Mammary epithelial cell (primary cell): ENCODE measurements at regions of chr2 and their contacts with region 1.

Region 1: GRCh38 chr2:216698895-216699294 is 3.5 kb upstream of the IGFBP5 start:
- DNase-seq: peak; percentile 49
- H3K4me3 ChIP-seq: no peak overlapping the region
- H3K27ac ChIP-seq: no peak overlapping the region
- H3K4me1 ChIP-seq: peaks cover 14% of the 10 kb centered on the region
- H3K27me3 ChIP-seq: peaks cover 4% of the 10 kb centered on the region
- CTCF ChIP-seq: peak; percentile 77 to 83

Region 2: GRCh38 chr2:216735086-216735485 is 36.2 kb after region 1 on chr2:
- CTCF ChIA-PET with region 1: no interaction called
- dilution Hi-C with region 1: loop called (anchors 5 kb)
- in situ Hi-C with region 1: no loop called
- intact Hi-C with region 1: no loop called
- DNase-seq: no peak
- H3K4me3 ChIP-seq: no peak overlapping the region
- H3K27ac ChIP-seq: no peak overlapping the region
- H3K4me1 ChIP-seq: no peaks in the 10 kb centered on the region
- H3K27me3 ChIP-seq: no peaks in the 10 kb centered on the region
- CTCF ChIP-seq: no peak

Region 3: DNA sequence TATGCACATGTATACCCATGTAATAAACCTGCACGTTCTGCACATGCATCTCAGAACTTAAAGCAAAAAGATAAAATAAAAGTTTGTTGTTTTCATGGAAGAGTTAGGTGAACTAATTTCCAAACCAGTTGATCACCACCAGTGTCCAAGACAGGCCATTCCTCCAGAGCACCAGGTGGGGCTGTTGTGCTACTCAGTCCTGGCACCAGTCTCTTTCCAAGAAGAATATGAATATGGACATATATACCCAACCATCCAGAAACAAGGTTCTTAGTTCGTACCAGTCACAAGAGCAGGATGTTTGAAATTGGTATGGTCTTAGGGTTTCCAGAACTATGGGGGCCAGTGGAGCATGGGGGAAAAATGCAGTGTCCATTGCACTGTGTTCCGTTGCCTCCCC is 178.2 kb after region 1 on chr2:
- CTCF ChIA-PET with region 1: no interaction called
- dilution Hi-C with region 1: no loop called
- in situ Hi-C with region 1: no loop called
- intact Hi-C with region 1: loop called (anchors 5 kb)
- DNase-seq: no peak
- H3K4me3 ChIP-seq: no peak overlapping the region
- H3K27ac ChIP-seq: no peak overlapping the region
- H3K4me1 ChIP-seq: no peaks in the 10 kb centered on the region
- H3K27me3 ChIP-seq: no peaks in the 10 kb centered on the region
- CTCF ChIP-seq: peak; percentile 37 to 55

Region 4: DNA sequence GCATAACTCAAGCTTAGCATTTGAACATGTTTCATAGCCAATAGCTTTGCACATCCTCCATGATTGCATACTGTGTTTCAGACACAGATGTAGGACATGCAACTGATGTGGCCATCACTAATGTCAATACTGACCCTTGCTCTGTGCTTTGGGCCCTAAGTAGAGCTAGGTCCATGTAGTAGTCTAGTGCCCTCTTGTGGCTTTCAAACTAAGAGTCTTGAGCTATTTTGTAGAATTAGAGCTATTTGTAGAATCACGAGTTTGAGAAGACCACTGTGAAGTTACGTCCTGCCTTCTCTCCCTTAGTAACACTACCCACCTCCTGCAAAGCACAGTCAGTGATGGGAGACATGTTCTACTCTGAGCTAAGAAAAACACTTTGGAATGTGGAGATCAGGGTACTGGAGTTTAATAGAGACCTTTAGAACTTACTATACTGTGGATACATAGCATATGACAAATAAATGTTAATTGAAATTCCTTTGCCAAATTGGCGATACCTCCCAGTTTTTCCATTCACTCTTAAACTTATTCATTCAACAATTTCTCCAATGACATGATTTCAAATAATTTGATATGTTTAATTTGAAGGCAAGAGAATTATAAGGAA is 467.5 kb after region 1 on chr2:
- CTCF ChIA-PET with region 1: no interaction called
- dilution Hi-C with region 1: no loop called
- in situ Hi-C with region 1: loop called (anchors 5 to 10 kb)
- intact Hi-C with region 1: loop called (anchors 1 kb)
- DNase-seq: peak; percentile 27
- H3K4me3 ChIP-seq: no peak overlapping the region
- H3K27ac ChIP-seq: no peak overlapping the region
- H3K4me1 ChIP-seq: peaks cover 8% of the 10 kb centered on the region
- H3K27me3 ChIP-seq: no peaks in the 10 kb centered on the region
- CTCF ChIP-seq: peak; percentile 57 to 69

Region 5: DNA sequence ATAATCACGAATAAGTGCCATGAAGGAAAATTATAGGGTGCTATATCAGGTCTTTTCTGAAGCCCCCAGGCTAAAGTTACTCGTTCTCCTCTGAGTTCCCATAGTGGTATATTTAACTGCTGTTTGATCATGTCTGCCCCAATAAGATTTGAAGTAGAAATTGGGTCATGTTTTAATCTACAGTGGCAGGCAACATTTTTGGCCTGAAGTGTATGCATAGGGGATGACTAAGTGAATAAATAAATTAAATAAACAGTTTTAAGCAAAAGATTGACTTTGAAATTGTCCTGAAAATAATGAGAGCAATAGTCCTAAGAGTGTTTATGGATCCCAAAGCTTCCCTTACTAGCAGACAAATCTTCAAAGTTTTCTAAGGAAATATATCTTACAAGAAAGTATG is 803.0 kb after region 1 on chr2:
- CTCF ChIA-PET with region 1: no interaction called
- dilution Hi-C with region 1: loop called (anchors 10 kb)
- in situ Hi-C with region 1: no loop called
- intact Hi-C with region 1: no loop called
- DNase-seq: no peak
- H3K4me3 ChIP-seq: no peak overlapping the region
- H3K27ac ChIP-seq: no peak overlapping the region
- H3K4me1 ChIP-seq: no peaks in the 10 kb centered on the region
- H3K27me3 ChIP-seq: no peaks in the 10 kb centered on the region
- CTCF ChIP-seq: no peak

Region 6: DNA sequence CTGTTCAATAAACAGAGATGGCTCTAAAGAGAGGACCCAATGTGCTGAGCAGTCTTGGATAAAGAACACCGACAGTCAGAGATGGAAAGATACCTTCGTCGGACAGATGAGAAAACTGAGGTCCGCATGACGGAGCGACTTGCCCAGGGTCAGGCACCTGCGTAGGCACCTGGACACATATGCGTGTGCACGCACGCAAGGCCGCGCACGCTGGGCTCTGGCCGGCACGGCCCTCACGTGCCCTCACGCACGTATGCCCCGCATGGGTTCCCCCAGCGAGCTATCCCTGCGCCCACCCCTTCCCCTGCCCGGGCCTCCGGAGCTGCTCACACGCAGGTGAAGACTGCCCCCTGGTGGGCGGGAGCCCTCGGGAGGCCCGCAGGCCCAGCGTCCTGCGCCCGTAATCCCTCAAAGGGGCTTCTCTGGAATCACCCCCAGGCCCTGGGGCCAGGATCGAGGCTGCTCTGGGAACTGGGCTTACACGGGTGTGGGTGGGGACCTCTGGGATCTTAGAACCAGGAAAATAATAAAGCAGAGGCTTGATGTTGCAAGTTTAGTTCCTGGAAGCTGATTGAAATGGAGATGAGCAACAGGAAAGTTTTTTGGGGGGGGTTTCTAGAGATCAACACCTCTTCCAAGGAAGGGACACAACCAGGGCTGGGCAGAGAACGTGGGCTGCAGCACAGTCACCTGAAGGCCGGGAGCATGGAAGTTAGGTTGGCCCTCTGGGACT is 1057.6 kb after region 1 on chr2:
- CTCF ChIA-PET with region 1: no interaction called
- dilution Hi-C with region 1: no loop called
- in situ Hi-C with region 1: no loop called
- intact Hi-C with region 1: loop called (anchors 5 kb)
- DNase-seq: no peak
- H3K4me3 ChIP-seq: no peak overlapping the region
- H3K27ac ChIP-seq: no peak overlapping the region
- H3K4me1 ChIP-seq: no peaks in the 10 kb centered on the region
- H3K27me3 ChIP-seq: peaks cover 3% of the 10 kb centered on the region
- CTCF ChIP-seq: peak; percentile 58 to 91